ENCODE measurements at regions of chr12 and their contacts with region 1.

Region 1: GRCh38 chr12:49088190-49088931 is 6.2 kb downstream of the DHH start:
- DNase-seq: peak; percentile 52 to 83 (median 68)
- ATAC-seq: peak; percentile 86 to 87
- H3K4me3 Mint-ChIP-seq: peak overlapping the region in 8 of 10 donors; percentile 8 to 71 (median 50)
- H3K27ac Mint-ChIP-seq: peak overlapping the region in 3 of 10 donors; percentile 39 to 47 (median 41)
- H3K4me1 Mint-ChIP-seq: peaks cover 10 to 46% (median 42%) of the 10 kb centered on the region in 4 donors
- H3K27me3 Mint-ChIP-seq: peaks cover 16 to 52% (median 38%) of the 10 kb centered on the region in 5 donors

Region 2: DNA sequence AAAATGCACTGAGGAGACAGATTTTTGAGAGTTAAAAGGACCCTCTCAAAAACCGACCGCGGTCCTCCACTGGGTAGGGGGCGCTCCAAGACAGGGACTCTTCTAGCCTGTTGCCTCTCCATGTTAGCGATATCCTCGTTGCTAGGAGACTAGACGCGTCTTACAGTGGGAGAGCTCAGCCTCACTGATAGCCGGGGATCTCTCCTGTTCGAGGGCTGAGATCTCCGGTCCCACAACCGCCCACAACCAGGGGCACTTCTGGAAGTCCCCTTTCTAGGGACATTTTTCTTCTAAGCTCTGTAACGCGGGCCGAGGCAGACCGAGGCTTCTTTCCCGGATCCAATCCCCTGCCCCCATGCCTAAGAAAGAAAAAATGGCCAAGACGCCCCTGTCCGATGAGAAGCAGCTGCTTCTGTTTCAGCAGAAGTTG is 184.4 kb before region 1 on chr12:
- POLR2A ChIA-PET with region 1: no interaction called
- DNase-seq: peak; percentile 75 to 95 (median 82)
- ATAC-seq: peak; percentile 100
- H3K4me3 Mint-ChIP-seq: peak overlapping the region; percentile 56 to 86 (median 82)
- H3K27ac Mint-ChIP-seq: peak overlapping the region in 7 of 10 donors; percentile 15 to 94 (median 90)
- H3K4me1 Mint-ChIP-seq: peaks cover 0 to 4% (median 1%) of the 10 kb centered on the region in 4 donors
- H3K27me3 Mint-ChIP-seq: peaks cover 0 to 4% (median 0%) of the 10 kb centered on the region in 5 donors

Region 3: GRCh38 chr12:49060237-49061156 is 27.9 kb before region 1 on chr12 and contains the start of gene KMT2D:
- POLR2A ChIA-PET with region 1: interaction called, 23 read pairs
- DNase-seq: peak; percentile 78 to 96 (median 86)
- ATAC-seq: peak; percentile 73 to 76
- H3K4me3 Mint-ChIP-seq: peak within 1 kb of the TSS; percentile 72 to 99 (median 94)
- H3K27ac Mint-ChIP-seq: peak within 1 kb of the TSS; percentile 92 to 99 (median 98)
- H3K4me1 Mint-ChIP-seq: peaks cover 42 to 58% (median 54%) of the 10 kb centered on the region in 4 donors
- H3K27me3 Mint-ChIP-seq: no peaks in the 10 kb centered on the region
- polyA plus RNA-seq, gene KMT2D: 1.5 to 28.5 (median 10.5) TPM

Region 4: GRCh38 chr12:49161092-49161795 is 72.9 kb after region 1 on chr12:
- POLR2A ChIA-PET with region 1: no interaction called
- DNase-seq: no peak
- ATAC-seq: no peak
- H3K4me3 Mint-ChIP-seq: no peak overlapping the region
- H3K27ac Mint-ChIP-seq: no peak overlapping the region
- H3K4me1 Mint-ChIP-seq: peaks cover 0 to 21% (median 0%) of the 10 kb centered on the region in 4 donors
- H3K27me3 Mint-ChIP-seq: no peaks in the 10 kb centered on the region

Measured in naive thymus-derived CD8-positive, alpha-beta T cell (primary cell).